ENCODE measurements at regions of chr17 and their contacts with region 1.

Region 1: DNA sequence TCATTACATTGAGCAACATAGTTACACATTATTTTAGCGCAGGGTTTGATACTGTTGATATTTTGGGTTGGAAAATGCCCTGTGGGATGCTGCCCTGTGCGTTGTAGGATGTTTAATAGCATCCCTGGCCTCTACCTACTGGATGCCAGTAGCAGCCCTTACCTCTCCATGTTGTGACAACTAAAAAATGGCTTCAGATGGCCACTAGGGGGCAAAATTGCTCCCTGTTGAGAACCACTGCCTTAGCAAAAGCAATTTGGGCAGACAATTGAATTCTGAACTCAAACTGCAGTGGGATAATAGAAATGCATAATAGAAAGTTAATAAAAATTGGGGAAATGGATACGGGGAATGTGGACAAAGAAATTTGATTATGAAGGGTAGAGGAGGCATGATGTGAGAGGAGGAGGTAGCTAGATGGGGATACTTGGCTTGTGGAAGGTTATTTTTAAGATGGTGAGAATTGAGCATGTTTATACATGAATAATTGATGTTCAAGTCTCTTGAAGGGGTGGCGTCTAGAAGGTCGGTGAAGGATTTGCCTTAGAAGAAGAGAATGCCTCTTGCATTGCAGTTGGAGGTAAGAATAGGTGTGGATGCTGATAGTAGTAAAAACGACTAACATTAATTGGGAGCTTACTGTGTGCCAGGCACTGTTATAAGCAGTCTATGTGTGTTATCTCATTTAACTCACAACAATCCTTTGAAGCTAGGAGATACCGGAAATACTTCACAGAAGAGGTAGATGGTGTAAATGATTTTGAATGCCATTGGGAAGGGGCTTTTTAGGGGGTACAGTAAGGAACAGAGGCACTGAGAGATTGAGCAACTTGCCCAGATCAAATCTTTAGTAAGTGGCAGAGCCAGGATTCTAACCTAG is 19.0 kb downstream of the HEATR9 start:
- H3K4me3 ChIP-seq: no peak overlapping the region
- H3K27ac ChIP-seq: no peak overlapping the region
- H3K4me1 ChIP-seq: no peaks in the 10 kb centered on the region
- CTCF ChIP-seq: peak; percentile 76

Region 2: DNA sequence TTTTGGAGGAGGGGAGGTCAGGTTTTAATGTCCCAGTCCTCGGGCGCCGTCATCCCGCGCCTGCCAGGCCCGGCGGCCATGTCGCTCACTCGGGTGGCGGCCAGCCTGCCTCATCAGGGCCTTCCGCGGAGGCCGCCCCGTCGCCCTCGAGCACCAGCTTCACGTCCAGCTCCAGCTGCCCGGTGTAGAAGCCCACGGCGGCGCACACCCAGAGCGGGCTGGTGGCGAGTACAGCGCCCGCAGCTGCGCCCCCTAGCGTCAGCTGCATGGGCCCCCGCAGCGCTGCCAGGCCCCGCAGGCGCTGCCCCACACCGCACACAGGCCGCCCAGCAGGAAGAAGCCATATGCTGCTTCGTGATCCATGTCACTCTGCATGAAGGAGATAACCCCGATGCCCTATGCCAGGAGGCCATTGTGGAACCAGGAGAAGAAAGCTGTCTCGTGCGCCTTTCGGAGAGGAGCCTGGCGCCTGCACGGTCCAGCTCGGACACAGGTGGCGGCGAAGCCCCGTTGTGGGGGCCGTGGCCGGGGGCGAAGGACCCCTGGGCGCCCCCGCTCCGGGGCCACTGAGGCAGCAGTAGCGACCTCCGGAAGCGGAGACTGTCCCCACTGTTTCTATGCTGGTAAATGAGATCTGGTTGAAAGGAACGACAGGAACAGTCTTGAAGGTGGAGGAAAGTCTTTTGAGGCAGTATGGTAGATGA is 253.0 kb before region 1 on chr17:
- CTCF ChIA-PET with region 1: no interaction called
- POLR2A ChIA-PET with region 1: no interaction called
- H3K4me3 ChIP-seq: no peak overlapping the region
- H3K27ac ChIP-seq: no peak overlapping the region
- H3K4me1 ChIP-seq: no peaks in the 10 kb centered on the region
- CTCF ChIP-seq: no peak

Region 3: DNA sequence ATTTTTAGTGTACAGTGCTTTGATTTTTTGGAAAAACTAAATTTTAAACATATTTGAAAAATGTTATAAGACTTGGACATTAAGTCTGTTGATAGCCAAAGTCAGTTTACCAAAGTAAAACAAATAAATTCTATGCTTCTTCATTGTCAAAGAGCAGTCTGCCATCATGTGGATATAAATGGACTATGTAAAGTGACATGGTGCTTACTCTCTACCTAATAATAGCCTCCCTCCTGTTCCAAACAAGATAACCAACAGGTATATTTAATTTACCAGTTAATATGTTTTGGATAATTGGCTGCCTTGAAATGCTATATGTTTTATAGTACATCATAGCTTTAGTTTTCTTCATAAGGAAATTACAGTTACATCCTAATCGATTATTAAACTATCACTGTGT is 24.5 kb before region 1 on chr17:
- CTCF ChIA-PET with region 1: interaction called, 11 read pairs
- POLR2A ChIA-PET with region 1: no interaction called
- H3K4me3 ChIP-seq: no peak overlapping the region
- H3K27ac ChIP-seq: no peak overlapping the region
- H3K4me1 ChIP-seq: no peaks in the 10 kb centered on the region
- CTCF ChIP-seq: no peak

Region 4: GRCh38 chr17:35865412-35866340 is 16.0 kb after region 1 on chr17:
- CTCF ChIA-PET with region 1: interaction called, 18 read pairs
- POLR2A ChIA-PET with region 1: no interaction called
- H3K4me3 ChIP-seq: no peak overlapping the region
- H3K27ac ChIP-seq: no peak overlapping the region
- H3K4me1 ChIP-seq: no peaks in the 10 kb centered on the region
- CTCF ChIP-seq: no peak